SK-N-SH (cell line): ENCODE measurements at regions of chr12 and their contacts with region 1.

Region 1: DNA sequence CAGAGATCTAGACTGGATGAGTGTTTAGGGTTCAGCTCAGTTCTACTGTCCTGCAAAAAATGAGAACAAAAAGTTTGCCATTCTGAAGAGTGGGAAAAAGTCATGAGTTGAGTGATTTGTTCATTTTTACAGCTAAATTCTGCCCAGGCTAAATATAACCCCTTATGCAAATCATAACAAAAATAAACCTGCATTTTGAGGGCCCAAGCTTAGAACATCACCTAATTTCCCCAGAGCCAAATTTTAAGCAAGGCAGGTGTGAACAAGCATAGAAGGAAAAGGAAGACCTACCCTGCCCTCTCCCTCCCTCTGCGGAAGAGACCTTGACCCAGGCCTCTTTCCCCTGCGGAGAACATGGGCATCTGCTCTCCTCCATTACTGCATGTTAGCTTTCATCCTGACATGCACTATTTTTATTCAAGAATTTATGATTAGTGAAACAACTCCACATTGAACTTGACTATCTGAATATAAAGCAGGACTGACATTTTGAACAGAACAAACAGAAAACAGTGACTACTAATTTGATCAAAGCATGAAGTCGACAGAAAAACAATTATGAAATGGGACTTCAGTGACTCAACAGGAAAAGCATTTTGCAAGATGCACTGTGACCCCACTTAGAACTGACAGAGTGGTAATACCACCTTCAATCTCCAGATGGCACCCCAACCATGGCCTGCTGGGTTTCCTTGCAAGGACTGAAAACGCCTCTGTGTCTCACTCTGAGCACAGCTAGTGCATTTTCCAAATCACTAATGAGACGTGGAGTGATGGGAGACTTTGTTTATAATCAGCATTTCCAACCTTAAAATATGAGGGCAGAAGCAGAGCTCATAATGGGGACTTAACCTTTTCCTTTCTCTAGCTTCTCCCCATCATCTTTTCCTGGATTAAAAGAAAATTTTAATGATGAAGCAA is 30.9 kb upstream of the SELPLG start:
- DNase-seq: peak; percentile 78
- H3K4me3 ChIP-seq: no peak overlapping the region; a peak in 1 of 4 replicates
- H3K27ac ChIP-seq: peak overlapping the region; percentile 84 to 91
- H3K4me1 ChIP-seq: peaks cover 46 to 61% of the 10 kb centered on the region in 2 experiments
- H3K27me3 ChIP-seq: no peaks in the 10 kb centered on the region
- CTCF ChIP-seq: peak; percentile 93
- EP300 ChIP-seq: peak in 1 of 2 experiments; percentile 18; a peak in 1 of 4 replicates
- RAD21 ChIP-seq: peak; percentile 100

Region 2: DNA sequence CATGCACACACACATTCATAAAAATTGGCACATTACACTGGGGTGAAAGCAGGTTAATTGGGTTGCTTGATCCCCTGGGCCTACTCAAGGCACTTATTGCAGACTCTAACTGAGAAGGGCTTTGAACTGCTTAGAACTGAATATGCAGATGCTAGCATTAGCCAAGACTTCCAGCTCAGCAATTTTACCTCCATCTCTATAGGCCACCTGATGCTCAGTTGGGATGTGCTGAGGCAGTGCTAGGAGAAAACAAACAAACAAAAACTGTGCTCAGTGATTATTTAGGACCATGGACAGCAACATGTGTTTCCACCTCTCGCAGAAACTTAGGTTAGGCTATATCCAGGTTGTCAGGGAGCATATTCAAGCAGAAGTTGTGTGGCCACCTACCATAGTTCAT is 660.3 kb before region 1 on chr12:
- CTCF ChIA-PET with region 1: no interaction called
- POLR2A ChIA-PET with region 1: no interaction called
- DNase-seq: no peak
- H3K4me3 ChIP-seq: no peak overlapping the region
- H3K27ac ChIP-seq: no peak overlapping the region
- H3K4me1 ChIP-seq: no peaks in the 10 kb centered on the region
- H3K27me3 ChIP-seq: no peaks in the 10 kb centered on the region
- CTCF ChIP-seq: no peak
- EP300 ChIP-seq: no peak
- RAD21 ChIP-seq: no peak

Region 3: DNA sequence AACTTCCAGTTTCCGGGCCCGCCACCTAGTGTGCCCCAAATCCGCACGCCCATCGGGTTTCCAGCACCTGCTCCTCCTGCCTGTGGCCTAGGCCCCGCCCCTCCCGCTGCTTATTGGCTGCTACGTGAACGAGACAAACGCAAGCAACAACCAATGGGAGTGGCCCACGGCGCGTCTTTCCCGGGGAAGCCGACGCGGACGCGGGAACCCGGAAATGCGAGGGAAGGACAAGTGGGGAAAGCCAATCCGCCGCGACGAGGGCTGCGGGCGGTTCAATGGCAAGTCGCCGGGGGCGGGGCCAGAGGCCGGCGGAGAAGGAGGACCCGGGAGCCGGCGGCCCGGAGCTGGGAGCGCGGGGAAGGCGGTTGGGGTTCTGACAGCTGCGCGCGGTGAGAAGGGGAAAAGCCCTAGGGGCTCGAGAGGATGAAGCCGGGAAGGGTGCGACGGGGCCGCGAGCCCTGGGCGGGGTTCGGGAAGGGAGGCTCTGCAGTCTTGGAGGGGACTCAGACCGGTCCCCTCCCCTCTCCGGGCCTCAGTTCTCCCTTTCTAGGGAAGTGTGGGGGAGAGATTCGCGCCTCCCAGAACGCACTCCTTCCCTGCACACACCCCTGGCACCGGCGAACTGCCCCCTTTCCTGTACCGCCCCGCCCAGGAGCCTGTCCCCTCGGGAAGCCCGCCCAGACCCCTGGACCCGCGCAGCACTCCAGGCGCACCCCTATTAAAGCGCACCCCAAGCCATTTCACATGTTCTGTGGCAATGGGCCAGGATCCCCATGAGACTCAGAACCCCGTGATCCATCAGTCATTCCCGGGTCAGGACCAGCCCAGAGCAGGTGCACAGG is 149.4 kb before region 1 on chr12 and contains the start of gene FICD:
- CTCF ChIA-PET with region 1: no interaction called
- POLR2A ChIA-PET with region 1: no interaction called
- DNase-seq: peak; percentile 96
- H3K4me3 ChIP-seq: peak within 1 kb of the TSS; percentile 68 to 92
- H3K27ac ChIP-seq: peak within 1 kb of the TSS; percentile 40 to 41; a peak in 2 of 4 replicates
- H3K4me1 ChIP-seq: peaks cover 5 to 17% of the 10 kb centered on the region in 2 experiments; a peak in 1 of 4 replicates
- H3K27me3 ChIP-seq: no peaks in the 10 kb centered on the region
- CTCF ChIP-seq: no peak
- EP300 ChIP-seq: no peak
- RAD21 ChIP-seq: no peak
- polyA plus RNA-seq, gene FICD: 1.0 and 1.2 TPM in 2 replicates

Region 4: DNA sequence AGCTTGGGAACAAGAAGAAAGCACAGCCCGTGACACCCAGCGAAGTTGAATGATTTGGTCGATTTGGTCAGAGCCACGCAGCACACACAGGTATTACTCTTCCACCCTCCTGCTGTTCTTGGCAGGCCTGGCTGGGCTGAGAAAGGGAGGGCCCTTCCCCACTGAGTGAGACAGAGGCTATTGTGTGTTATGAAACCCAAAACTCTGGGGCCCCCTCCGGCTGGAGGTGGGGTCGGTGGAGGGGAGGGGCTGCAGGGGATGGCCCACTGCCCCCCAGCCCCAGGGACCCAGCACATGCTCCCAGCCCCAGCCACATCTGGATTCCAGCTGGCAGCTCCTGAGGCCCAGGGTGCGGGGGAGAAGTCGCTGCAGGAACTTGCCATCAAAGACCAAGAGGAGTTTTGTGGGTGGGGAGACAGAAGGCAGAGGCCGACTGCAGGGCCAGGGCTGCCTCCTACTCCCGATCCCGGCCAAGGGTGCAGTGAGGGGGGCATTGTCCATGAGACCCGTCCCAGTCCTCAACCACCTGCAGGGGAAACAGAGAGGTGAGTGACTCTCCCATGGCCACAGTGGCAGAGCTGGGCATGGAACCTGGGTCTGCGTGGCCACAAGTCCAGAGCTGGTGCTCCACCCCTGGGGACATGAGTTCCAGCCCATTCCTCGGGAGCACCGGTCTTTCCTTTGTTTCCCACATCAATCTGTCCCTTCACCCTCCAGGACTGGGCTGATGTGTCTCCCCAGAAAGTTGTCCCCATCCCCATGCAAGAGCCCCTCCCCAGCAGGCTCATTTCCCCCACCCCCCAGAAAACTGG is 75.4 kb before region 1 on chr12:
- CTCF ChIA-PET with region 1: no interaction called
- POLR2A ChIA-PET with region 1: no interaction called
- DNase-seq: peak; percentile 77
- H3K4me3 ChIP-seq: no peak overlapping the region
- H3K27ac ChIP-seq: peak overlapping the region in 1 of 2 experiments; percentile 29; a peak in 1 of 4 replicates
- H3K4me1 ChIP-seq: peaks cover 0 to 20% of the 10 kb centered on the region in 2 experiments; a peak in 1 of 4 replicates
- H3K27me3 ChIP-seq: no peaks in the 10 kb centered on the region
- CTCF ChIP-seq: no peak
- EP300 ChIP-seq: no peak
- RAD21 ChIP-seq: no peak

Region 5: DNA sequence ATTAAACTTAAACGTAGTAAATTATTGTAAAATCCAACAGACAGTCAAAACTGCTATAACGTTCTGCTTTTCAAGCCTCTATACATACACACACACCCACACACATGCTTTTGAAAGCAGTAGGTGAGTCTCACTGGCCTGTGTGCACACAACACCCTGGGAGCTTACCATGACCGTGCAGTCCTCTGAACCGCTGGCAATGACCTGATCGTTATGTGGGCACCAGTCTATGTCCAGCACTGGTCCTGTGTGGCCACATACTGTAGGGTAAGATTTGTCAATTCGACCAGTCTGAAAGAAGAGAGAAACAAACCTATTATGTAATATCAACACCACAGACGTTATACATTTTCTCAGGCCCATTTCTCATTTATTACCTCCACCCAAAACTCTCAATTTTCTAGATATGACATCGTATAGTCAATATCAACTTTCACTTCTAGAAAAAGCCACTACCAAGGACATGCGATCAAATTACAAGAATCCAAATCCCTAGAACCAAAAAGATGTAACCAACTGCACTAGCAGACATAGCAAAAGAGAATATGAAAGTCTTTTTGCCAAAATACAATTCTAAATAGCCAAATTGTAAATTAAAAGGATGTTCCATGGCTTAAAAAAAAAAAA is 13.6 kb after region 1 on chr12:
- CTCF ChIA-PET with region 1: interaction called, 10 read pairs
- POLR2A ChIA-PET with region 1: no interaction called
- DNase-seq: no peak
- H3K4me3 ChIP-seq: no peak overlapping the region
- H3K27ac ChIP-seq: no peak overlapping the region
- H3K4me1 ChIP-seq: peaks cover 0 to 24% of the 10 kb centered on the region in 2 experiments; a peak in 2 of 4 replicates
- H3K27me3 ChIP-seq: no peaks in the 10 kb centered on the region
- CTCF ChIP-seq: no peak
- EP300 ChIP-seq: no peak
- RAD21 ChIP-seq: no peak

Region 6: GRCh38 chr12:108722992-108723766 is 58.6 kb after region 1 on chr12:
- CTCF ChIA-PET with region 1: interaction called, 16 read pairs
- POLR2A ChIA-PET with region 1: no interaction called
- DNase-seq: no peak
- H3K4me3 ChIP-seq: peak overlapping the region in 1 of 2 experiments; percentile 23; a peak in 2 of 4 replicates
- H3K27ac ChIP-seq: peak overlapping the region; percentile 51 to 93; a peak in 3 of 4 replicates
- H3K4me1 ChIP-seq: peaks cover 31 to 52% of the 10 kb centered on the region in 2 experiments; a peak in 3 of 4 replicates
- H3K27me3 ChIP-seq: no peaks in the 10 kb centered on the region
- CTCF ChIP-seq: no peak
- EP300 ChIP-seq: peak in 1 of 2 experiments; percentile 95; a peak in 2 of 4 replicates
- RAD21 ChIP-seq: no peak

Region 7: DNA sequence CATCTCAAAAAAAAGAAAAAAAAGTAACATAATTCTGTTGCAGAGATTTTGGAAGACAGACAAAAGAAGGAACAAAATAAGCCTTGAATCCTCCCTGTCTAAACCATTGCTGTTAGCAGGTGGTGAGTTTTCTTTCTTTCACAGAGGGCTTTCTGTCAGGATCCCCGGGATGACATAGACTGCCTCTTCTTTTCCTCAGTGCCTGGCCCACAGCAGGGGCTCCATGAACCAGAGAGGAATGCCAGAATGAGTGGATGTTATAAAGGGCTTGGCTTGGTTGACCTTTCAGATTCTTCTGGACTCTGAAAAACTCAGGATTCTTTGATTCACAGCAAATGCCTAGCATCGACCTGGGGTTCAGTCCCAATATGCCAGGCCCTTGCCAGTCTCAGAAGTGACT is 112.6 kb after region 1 on chr12:
- CTCF ChIA-PET with region 1: interaction called, 10 read pairs
- POLR2A ChIA-PET with region 1: no interaction called
- DNase-seq: no peak
- H3K4me3 ChIP-seq: no peak overlapping the region
- H3K27ac ChIP-seq: no peak overlapping the region
- H3K4me1 ChIP-seq: peaks cover 0 to 14% of the 10 kb centered on the region in 2 experiments; a peak in 1 of 4 replicates
- H3K27me3 ChIP-seq: no peaks in the 10 kb centered on the region
- CTCF ChIP-seq: no peak
- EP300 ChIP-seq: no peak
- RAD21 ChIP-seq: no peak

Region 8: DNA sequence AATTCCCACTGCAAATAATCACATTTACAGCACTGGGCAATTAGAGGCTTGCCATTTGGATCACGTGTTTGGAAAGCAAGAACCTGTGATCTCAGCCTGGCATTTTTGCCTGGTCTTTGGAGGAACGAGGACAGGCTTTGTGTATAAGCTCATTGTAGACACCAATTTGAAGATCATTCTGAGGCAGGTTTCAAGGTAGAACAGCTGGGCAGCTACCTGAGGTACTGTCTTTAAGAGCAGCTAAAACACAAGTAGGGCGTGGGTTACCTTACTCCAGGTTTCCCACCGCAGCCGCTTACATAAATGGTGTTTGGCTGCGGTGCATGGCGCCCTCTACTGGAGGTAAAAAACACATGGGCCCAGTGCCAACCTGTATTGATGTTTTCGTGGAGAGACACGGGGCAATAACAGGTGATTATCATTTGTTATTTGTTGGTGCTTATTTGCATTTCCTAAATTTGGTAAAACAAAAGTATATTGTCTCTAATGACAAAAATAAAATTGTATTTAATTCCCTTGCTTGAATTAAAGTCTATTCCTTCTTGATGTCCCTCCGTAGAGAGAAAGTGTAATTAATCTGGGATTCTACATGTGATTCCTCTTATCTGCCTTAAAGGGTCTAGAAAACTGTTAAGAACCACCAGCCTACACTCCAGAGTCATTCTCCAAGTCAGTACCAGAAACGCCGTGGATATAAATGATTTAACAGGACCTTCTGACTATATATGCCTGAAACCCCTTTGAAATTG is 286.6 kb after region 1 on chr12:
- CTCF ChIA-PET with region 1: interaction called, 11 read pairs
- POLR2A ChIA-PET with region 1: no interaction called
- DNase-seq: peak; percentile 53
- H3K4me3 ChIP-seq: no peak overlapping the region; a peak in 1 of 4 replicates
- H3K27ac ChIP-seq: no peak overlapping the region
- H3K4me1 ChIP-seq: peaks cover 0 to 3% of the 10 kb centered on the region in 2 experiments; a peak in 1 of 4 replicates
- H3K27me3 ChIP-seq: no peaks in the 10 kb centered on the region
- CTCF ChIP-seq: peak; percentile 89
- EP300 ChIP-seq: peak in 1 of 2 experiments; percentile 10; a peak in 1 of 4 replicates
- RAD21 ChIP-seq: peak; percentile 87